ENCODE measurements at regions of chr7 and their contacts with region 1.

Region 1: GRCh38 chr7:149624419-149625339 is 127.1 kb upstream of the ZNF746 start:
- DNase-seq: peak; percentile 91
- ATAC-seq: peak; percentile 93
- H3K4me3 ChIP-seq: peak overlapping the region; percentile 74
- H3K27ac ChIP-seq: peak overlapping the region; percentile 86
- H3K4me1 ChIP-seq: peaks cover 3% of the 10 kb centered on the region; the same call in 1 of the 2 replicates
- H3K27me3 ChIP-seq: peaks cover 4% of the 10 kb centered on the region; the same call in 1 of the 2 replicates
- CTCF ChIP-seq: peak; percentile 84
- POLR2A ChIP-seq: peak; percentile 87
- RAD21 ChIP-seq: peak; percentile 22; the same call in 1 of the 2 replicates

Region 2: GRCh38 chr7:148084138-148084537 is 1540.5 kb before region 1 on chr7:
- CTCF ChIA-PET with region 1: no interaction called
- POLR2A ChIA-PET with region 1: no interaction called
- dilution Hi-C with region 1: no loop called
- in situ Hi-C with region 1: no loop called
- intact Hi-C with region 1: no loop called
- DNase-seq: peak; percentile 19
- ATAC-seq: peak; percentile 63
- H3K4me3 ChIP-seq: no peak overlapping the region
- H3K27ac ChIP-seq: no peak overlapping the region
- H3K4me1 ChIP-seq: no peaks in the 10 kb centered on the region
- H3K27me3 ChIP-seq: no peaks in the 10 kb centered on the region
- CTCF ChIP-seq: peak; percentile 29; the same call in 1 of the 2 replicates
- POLR2A ChIP-seq: no peak
- RAD21 ChIP-seq: peak; percentile 52

Region 3: DNA sequence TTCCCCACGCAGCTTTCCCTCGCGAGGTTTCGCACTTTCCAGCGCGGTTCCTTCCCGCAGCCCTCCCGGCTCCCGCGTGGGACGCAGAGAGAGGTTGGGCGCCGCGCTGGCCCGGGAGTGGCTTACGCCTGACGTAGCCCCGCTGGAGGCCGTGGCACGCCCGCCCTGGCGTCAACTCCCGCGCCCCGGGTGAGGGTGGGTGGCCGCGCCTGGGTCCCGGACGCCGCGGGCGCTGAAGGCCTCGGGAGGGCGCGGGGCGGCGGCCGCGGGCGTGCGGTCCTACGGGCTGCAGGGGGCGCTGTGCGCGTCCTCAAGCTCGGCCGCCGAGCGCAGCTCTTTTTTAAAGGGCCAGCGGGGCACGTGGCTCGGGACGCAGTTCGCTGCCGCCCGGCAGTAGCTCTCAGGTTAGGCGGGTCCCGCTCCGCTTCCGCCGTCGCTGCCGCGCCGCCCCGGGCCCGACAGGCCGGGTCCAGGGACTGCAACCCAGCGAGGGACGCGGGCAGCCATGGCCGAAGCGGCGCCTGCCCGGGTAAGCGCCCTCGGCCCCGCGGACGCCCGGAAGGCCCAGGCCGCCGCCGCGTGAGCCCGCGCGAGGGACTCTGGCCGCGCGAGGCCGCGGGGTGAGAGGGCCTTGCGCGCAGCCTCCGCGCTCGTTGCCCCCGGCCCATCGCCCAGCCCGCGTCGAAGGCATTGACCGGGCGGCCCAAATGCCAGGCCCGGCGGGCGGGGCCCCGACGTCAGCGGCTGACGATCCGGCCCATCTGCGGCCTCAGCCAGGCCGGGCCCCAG is 362.7 kb before region 1 on chr7 and contains the start of gene ZNF783:
- CTCF ChIA-PET with region 1: no interaction called
- POLR2A ChIA-PET with region 1: no interaction called
- dilution Hi-C with region 1: no loop called
- in situ Hi-C with region 1: no loop called
- intact Hi-C with region 1: loop called (anchors 5 kb)
- DNase-seq: peak; percentile 85
- ATAC-seq: peak; percentile 94
- H3K4me3 ChIP-seq: peak within 1 kb of the TSS; percentile 61
- H3K27ac ChIP-seq: peak within 1 kb of the TSS; percentile 54
- H3K4me1 ChIP-seq: peaks cover 7% of the 10 kb centered on the region
- H3K27me3 ChIP-seq: no peaks in the 10 kb centered on the region
- CTCF ChIP-seq: peak; percentile 81
- POLR2A ChIP-seq: no peak
- RAD21 ChIP-seq: peak; percentile 44
- total RNA-seq, gene ZNF783: 2.3 and 2.8 TPM in 2 replicates

Region 4: GRCh38 chr7:149422129-149422913 is 202.4 kb before region 1 on chr7:
- CTCF ChIA-PET with region 1: no interaction called
- POLR2A ChIA-PET with region 1: no interaction called
- dilution Hi-C with region 1: no loop called
- in situ Hi-C with region 1: no loop called
- intact Hi-C with region 1: loop called (anchors 10 kb)
- DNase-seq: peak; percentile 53
- ATAC-seq: peak; percentile 98
- H3K4me3 ChIP-seq: peak overlapping the region; percentile 31
- H3K27ac ChIP-seq: no peak overlapping the region
- H3K4me1 ChIP-seq: no peaks in the 10 kb centered on the region
- H3K27me3 ChIP-seq: no peaks in the 10 kb centered on the region
- CTCF ChIP-seq: peak; percentile 85
- POLR2A ChIP-seq: no peak
- RAD21 ChIP-seq: peak; percentile 32; the same call in 1 of the 2 replicates

Region 5: DNA sequence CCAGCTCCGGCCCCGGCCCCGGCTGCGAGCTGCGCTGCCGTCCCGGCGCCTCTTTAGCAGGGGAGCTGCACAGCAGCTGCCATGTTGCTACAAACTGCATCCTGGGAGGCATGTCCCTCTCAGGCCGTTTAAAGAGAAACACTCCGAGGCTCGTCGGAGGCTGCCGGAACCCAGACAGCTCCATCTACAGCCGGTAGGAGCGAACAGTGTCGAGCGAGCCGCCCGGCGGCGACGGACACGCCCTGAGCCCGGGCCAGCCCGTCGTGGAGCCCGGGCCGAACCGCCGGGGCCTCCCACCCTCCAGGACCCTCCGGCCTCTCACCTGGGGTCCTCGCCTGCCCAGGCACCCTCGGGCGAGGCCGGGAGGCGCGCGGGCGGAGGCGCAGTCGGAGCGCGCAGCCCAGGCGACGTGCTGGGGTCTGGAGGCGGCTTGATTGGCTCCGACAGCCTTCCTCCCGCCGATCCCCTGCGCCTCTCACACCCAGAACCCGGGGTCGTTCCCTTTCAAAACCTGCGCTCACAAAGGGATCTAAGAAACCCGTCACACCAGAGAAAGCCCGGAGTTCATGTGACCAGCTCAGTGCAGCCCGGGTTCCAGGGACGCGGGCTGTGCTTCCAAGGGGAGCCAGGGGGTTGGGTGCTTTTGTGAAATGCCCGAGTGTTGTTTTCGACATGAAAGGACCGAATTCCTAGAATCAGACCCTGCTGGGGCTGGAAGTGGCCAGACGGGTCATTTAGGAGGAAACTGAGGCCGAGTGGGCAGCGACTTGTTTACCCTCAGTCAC is 164.0 kb before region 1 on chr7 and contains the start of gene ZNF777:
- CTCF ChIA-PET with region 1: no interaction called
- POLR2A ChIA-PET with region 1: no interaction called
- dilution Hi-C with region 1: no loop called
- in situ Hi-C with region 1: no loop called
- intact Hi-C with region 1: loop called (anchors 10 kb)
- DNase-seq: peak; percentile 87
- ATAC-seq: peak; percentile 97
- H3K4me3 ChIP-seq: peak within 1 kb of the TSS; percentile 91
- H3K27ac ChIP-seq: peak within 1 kb of the TSS; percentile 79
- H3K4me1 ChIP-seq: peaks cover 5% of the 10 kb centered on the region; the same call in 1 of the 2 replicates
- H3K27me3 ChIP-seq: no peaks in the 10 kb centered on the region
- CTCF ChIP-seq: peak; percentile 60
- POLR2A ChIP-seq: peak; percentile 63; the same call in 1 of the 2 replicates
- RAD21 ChIP-seq: 0 out of 2 replicates have a peak, but pooled peaks have one; percentile 26
- total RNA-seq, gene ZNF777: 3.2 and 3.6 TPM in 2 replicates

Region 6: GRCh38 chr7:149497456-149498261 is 127.0 kb before region 1 on chr7 and contains the start of gene ZNF746:
- CTCF ChIA-PET with region 1: no interaction called
- POLR2A ChIA-PET with region 1: no interaction called
- dilution Hi-C with region 1: no loop called
- in situ Hi-C with region 1: no loop called
- intact Hi-C with region 1: loop called (anchors 1 kb)
- DNase-seq: peak; percentile 76
- ATAC-seq: peak; percentile 91
- H3K4me3 ChIP-seq: peak within 1 kb of the TSS; percentile 100
- H3K27ac ChIP-seq: peak within 1 kb of the TSS; percentile 100
- H3K4me1 ChIP-seq: peaks cover 11% of the 10 kb centered on the region
- H3K27me3 ChIP-seq: peaks cover 15% of the 10 kb centered on the region
- CTCF ChIP-seq: peak; percentile 85
- POLR2A ChIP-seq: peak; percentile 58; the same call in 1 of the 2 replicates
- RAD21 ChIP-seq: peak; percentile 65
- total RNA-seq, gene ZNF746: 6.6 and 6.7 TPM in 2 replicates

Region 7: GRCh38 chr7:149714050-149714909 is 89.6 kb after region 1 on chr7:
- CTCF ChIA-PET with region 1: no interaction called
- POLR2A ChIA-PET with region 1: no interaction called
- dilution Hi-C with region 1: no loop called
- in situ Hi-C with region 1: no loop called
- intact Hi-C with region 1: loop called (anchors 10 kb)
- DNase-seq: peak; percentile 82
- ATAC-seq: peak; percentile 98
- H3K4me3 ChIP-seq: peak overlapping the region; percentile 86
- H3K27ac ChIP-seq: no peak overlapping the region; the same call in 1 of the 2 replicates
- H3K4me1 ChIP-seq: peaks cover 12% of the 10 kb centered on the region
- H3K27me3 ChIP-seq: no peaks in the 10 kb centered on the region
- CTCF ChIP-seq: no peak
- POLR2A ChIP-seq: peak; percentile 19; the same call in 1 of the 2 replicates
- RAD21 ChIP-seq: no peak

Region 8: DNA sequence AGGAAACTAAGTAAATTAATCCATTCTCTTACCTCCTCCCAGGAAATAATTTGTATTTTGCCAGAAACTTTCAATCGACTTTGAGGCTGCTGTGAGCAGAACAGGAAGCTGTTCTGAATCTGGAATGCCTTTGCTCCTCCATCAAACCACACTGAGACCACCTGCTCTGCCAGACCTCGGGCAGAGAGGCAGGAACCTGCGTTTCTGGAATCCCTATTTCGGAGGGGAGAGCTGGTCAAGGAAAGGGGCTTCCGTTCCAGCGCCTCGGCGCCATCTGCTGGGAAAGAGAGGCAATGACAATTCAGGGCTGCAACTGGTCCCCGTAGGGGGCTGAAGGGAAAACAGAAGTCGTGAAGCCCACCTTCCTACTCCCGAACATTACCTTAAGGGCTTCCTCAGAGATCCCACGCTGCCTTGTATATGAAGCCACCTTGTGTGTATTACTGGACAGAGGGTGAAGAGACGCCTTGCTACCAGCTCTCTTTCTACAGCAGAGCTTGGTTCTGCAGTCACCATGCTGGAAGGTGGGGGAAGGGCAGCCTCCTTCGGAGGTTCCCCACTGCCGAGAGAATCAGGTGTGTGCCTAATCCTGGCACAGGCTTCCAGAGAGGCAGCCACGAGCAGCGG is 117.5 kb after region 1 on chr7:
- CTCF ChIA-PET with region 1: interaction called, 3 read pairs
- POLR2A ChIA-PET with region 1: no interaction called
- dilution Hi-C with region 1: no loop called
- in situ Hi-C with region 1: no loop called
- intact Hi-C with region 1: loop called (anchors 1 kb)
- DNase-seq: peak; percentile 41
- ATAC-seq: peak; percentile 99
- H3K4me3 ChIP-seq: peak overlapping the region; percentile 16; the same call in 1 of the 2 replicates
- H3K27ac ChIP-seq: no peak overlapping the region
- H3K4me1 ChIP-seq: no peaks in the 10 kb centered on the region
- H3K27me3 ChIP-seq: peaks cover 6% of the 10 kb centered on the region; the same call in 1 of the 2 replicates
- CTCF ChIP-seq: peak; percentile 78
- POLR2A ChIP-seq: no peak
- RAD21 ChIP-seq: peak; percentile 78